ENCODE measurements at regions of chr11 and their contacts with region 1.

Region 1: GRCh38 chr11:64924102-64924851 is at the start of gene PPP2R5B:
- DNase-seq: peak; percentile 95
- H3K4me3 ChIP-seq: peak within 1 kb of the TSS; percentile 53 to 96 (median 92)
- H3K27ac ChIP-seq: peak within 1 kb of the TSS; percentile 94 to 96 (median 95)
- H3K4me1 ChIP-seq: peaks cover 9 to 18% of the 10 kb centered on the region in 2 donors
- H3K27me3 ChIP-seq: no peaks in the 10 kb centered on the region
- CTCF ChIP-seq: peak in 2 of 6 experiments; percentile 12 to 49
- POLR2A ChIP-seq: peak in 1 of 2 donors; percentile 84
- total RNA-seq, gene PPP2R5B: 14.8 to 30.1 (median 21.7) TPM

Region 2: DNA sequence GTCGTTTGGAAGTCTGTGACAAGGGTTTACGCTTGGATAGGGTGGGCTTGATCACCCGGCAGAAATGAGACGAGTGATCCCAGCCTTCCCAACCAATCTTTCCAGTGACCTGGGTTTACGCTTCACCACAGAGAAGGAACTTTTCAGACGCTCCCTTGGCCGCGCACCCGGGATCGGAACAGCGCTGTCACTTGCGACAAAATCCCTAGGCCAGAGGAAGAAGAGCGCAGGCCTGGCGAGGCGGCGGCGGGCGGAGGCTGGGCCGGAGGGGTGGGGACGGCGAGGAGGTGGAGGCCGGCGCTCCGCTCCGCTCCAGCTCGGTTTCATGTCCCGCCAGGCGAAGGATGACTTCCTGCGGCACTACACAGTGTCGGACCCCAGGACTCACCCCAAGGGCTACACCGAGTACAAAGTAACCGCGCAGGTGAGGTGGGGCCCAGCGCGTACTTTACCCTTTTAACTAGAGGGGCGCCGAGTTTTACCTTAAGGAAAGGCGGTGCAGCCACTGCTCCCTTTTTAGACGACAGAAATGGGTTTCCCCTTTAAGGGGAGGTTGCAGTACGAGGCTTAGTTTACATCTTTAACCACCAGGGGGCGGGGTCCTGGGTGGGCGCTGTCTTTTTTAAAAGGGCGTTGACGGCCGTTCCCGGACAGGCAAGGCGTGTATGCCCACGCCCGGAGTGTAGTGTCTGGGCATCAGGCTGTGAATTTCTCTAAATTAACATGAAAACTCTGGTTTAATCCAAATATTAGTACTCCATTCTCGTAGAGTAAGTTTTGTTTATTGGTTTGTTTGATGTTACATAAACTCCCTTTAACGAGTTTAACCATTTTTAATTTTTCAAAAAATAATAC is 103.2 kb after region 1 on chr11 and contains the start of gene SNX15:
- intact Hi-C with region 1: loop called (anchors 5 kb)
- DNase-seq: peak; percentile 92 to 94
- H3K4me3 ChIP-seq: peak within 1 kb of the TSS; percentile 42 to 53 (median 45)
- H3K27ac ChIP-seq: peak within 1 kb of the TSS; percentile 74 to 90 (median 90)
- H3K4me1 ChIP-seq: peaks cover 8 to 12% of the 10 kb centered on the region in 2 donors
- H3K27me3 ChIP-seq: no peaks in the 10 kb centered on the region
- CTCF ChIP-seq: peak; percentile 45 to 90 (median 56)
- POLR2A ChIP-seq: peak in 1 of 2 donors; percentile 78
- total RNA-seq, gene SNX15: 11.6 to 36.4 (median 19.2) TPM

Region 3: GRCh38 chr11:65615229-65615941 is 691.1 kb after region 1 on chr11 and contains the start of gene PCNX3:
- intact Hi-C with region 1: loop called (anchors 5 kb)
- DNase-seq: peak; percentile 100
- H3K4me3 ChIP-seq: peak within 1 kb of the TSS; percentile 68 to 95 (median 75)
- H3K27ac ChIP-seq: peak within 1 kb of the TSS; percentile 90 to 94 (median 91)
- H3K4me1 ChIP-seq: peaks cover 30 to 40% of the 10 kb centered on the region in 2 donors
- H3K27me3 ChIP-seq: no peaks in the 10 kb centered on the region
- CTCF ChIP-seq: peak in 1 of 6 experiments; percentile 37
- POLR2A ChIP-seq: peak in 1 of 2 donors; percentile 54
- total RNA-seq, gene PCNX3: 18.9 to 54.2 (median 47.0) TPM

Measured in thyroid gland (tissue), 4 donors.